ENCODE measurements at regions of chr2 and their contacts with region 1.

Region 1: DNA sequence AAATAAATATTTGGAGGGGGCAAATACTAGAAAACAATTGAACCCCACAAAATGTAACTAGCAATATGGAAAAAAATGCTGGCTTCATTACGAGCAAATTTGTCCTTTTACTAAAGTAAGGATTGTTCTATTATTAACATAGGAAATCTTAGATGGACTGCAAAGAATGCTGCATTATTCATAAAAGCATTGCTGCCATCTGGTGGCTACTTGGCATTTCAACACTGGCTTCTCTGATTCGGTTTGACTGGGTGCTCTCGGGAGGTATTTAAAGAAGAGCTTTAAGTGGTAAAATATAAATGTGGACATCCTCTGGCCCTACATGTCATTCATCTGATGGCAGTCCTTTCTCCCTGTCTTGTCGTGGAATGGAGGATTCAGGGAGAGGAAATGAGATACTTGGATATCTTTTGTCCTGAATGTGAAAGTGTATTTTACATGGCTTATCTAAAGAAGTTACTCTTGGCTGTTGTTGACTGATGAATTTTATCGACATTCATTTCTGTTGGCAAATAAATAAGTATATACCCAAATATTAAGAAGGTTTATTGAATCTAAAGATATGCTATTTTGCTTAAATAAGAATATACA is 130.2 kb downstream of the ARHGAP15 start:
- DNase-seq: peak in 1 of 2 donors; percentile 86
- H3K4me3 ChIP-seq: peak overlapping the region; percentile 33 to 41
- H3K27ac ChIP-seq: no peak overlapping the region
- H3K4me1 ChIP-seq: peaks cover 0 to 3% of the 10 kb centered on the region in 2 donors
- H3K27me3 ChIP-seq: no peaks in the 10 kb centered on the region
- CTCF ChIP-seq: peak; percentile 43 to 73 (median 71)

Region 2: GRCh38 chr2:143034292-143035074 is 225.0 kb before region 1 on chr2:
- intact Hi-C with region 1: loop called (anchors 2 kb)
- DNase-seq: peak in 1 of 2 donors; percentile 75
- H3K4me3 ChIP-seq: no peak overlapping the region
- H3K27ac ChIP-seq: no peak overlapping the region
- H3K4me1 ChIP-seq: no peaks in the 10 kb centered on the region
- H3K27me3 ChIP-seq: no peaks in the 10 kb centered on the region
- CTCF ChIP-seq: peak; percentile 78 to 96 (median 95)

Region 3: GRCh38 chr2:143110758-143111428 is 148.6 kb before region 1 on chr2:
- intact Hi-C with region 1: loop called (anchors 2 kb)
- DNase-seq: peak in 1 of 2 donors; percentile 70
- H3K4me3 ChIP-seq: no peak overlapping the region
- H3K27ac ChIP-seq: no peak overlapping the region
- H3K4me1 ChIP-seq: no peaks in the 10 kb centered on the region
- H3K27me3 ChIP-seq: no peaks in the 10 kb centered on the region
- CTCF ChIP-seq: peak; percentile 38 to 64 (median 51)

Region 4: DNA sequence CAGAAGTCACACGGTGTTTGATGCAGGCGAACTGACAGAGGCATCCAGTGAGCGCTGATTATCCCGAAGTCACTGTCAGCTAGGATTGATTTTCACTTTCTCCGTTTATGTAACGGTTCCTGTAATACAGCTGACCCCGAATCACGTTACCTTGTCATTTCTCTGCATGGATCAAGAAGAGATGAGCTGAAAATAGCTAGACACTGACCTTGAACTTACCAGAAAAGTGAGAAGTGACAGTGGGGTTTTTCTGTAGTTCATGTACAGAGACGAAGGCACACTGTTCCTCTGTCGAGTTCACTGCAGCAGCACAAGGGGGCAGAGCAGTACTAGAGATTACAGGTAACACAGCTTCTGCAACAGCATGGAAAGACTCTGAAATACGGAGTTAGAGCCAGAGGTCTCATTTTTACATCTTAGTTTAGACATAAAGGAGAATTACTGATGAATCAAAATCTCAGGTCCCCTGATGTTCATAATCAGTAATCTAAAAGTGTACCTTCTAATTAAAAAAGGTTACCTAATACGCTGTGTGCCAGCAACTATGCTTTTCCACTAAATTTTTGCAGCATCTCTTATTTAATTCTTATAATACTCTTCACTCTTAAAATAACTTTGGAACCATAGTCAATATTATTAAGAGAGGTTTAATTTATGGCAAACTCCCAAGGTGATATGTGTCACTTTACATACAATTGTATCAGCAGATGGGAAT is 97.2 kb before region 1 on chr2:
- intact Hi-C with region 1: loop called (anchors 1 kb)
- DNase-seq: no peak
- H3K4me3 ChIP-seq: no peak overlapping the region
- H3K27ac ChIP-seq: no peak overlapping the region
- H3K4me1 ChIP-seq: no peaks in the 10 kb centered on the region
- H3K27me3 ChIP-seq: no peaks in the 10 kb centered on the region
- CTCF ChIP-seq: peak; percentile 43 to 61 (median 45)

Region 5: GRCh38 chr2:143205106-143205764 is 54.2 kb before region 1 on chr2:
- intact Hi-C with region 1: loop called (anchors 2 kb)
- DNase-seq: no peak
- H3K4me3 ChIP-seq: no peak overlapping the region
- H3K27ac ChIP-seq: no peak overlapping the region
- H3K4me1 ChIP-seq: peaks cover 0 to 3% of the 10 kb centered on the region in 2 donors
- H3K27me3 ChIP-seq: no peaks in the 10 kb centered on the region
- CTCF ChIP-seq: peak in 1 of 3 experiments; percentile 39

Region 6: GRCh38 chr2:143489145-143489544 is 229.7 kb after region 1 on chr2:
- intact Hi-C with region 1: loop called (anchors 10 kb)
- DNase-seq: no peak
- H3K4me3 ChIP-seq: peak overlapping the region in 1 of 2 donors; percentile 27
- H3K27ac ChIP-seq: peak overlapping the region; percentile 16 to 22
- H3K4me1 ChIP-seq: peaks cover 0 to 3% of the 10 kb centered on the region in 2 donors
- H3K27me3 ChIP-seq: no peaks in the 10 kb centered on the region
- CTCF ChIP-seq: no peak